Thyroid gland (tissue), 4 donors: ENCODE measurements at regions of chr1 and their contacts with region 1.

Region 1: DNA sequence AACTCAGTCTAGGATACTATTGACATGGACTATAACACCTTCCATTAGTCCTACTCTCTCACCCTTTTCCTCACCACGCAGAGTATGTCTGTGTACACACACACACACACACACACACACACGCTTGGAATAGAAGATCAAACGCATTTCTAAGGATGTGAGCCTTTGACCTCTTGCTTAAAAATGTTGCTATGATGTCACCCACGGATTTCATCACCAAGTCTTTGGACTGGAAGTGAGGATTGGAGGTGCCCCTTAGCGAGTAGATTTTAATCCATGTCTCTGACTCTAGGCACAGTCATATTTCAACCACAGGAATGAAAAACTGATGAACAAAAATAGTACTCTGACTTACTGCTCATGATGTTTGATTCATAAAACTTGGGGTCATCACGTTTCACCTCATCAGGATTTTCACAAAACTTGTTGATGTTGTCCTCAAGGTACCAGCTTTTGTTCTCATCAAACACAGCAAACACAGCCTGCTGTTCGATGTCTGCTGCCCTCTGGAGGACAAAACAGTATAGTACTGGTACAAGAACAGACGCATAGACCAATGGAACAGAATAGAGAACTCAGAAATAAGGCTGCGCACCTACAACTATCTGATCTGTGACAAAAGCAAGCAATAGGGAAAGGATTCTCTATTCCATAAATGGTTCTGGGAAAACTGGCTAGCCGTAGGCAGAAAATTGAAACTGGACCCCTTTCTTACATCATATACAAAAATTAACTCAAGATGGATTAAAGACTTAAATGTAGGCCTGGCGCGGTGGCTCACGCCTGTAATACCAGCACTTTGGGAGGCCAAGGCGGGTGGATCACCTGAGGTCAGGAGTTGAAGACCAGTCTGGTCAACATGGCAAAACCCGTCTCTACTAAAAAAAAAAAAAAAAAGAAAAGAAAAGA is 39.9 kb downstream of the F5 start:
- DNase-seq: peak; percentile 44 to 51
- H3K4me3 ChIP-seq: no peak overlapping the region
- H3K27ac ChIP-seq: no peak overlapping the region
- H3K4me1 ChIP-seq: no peaks in the 10 kb centered on the region
- H3K27me3 ChIP-seq: no peaks in the 10 kb centered on the region
- CTCF ChIP-seq: peak; percentile 48 to 90 (median 84)
- POLR2A ChIP-seq: no peak

Region 2: DNA sequence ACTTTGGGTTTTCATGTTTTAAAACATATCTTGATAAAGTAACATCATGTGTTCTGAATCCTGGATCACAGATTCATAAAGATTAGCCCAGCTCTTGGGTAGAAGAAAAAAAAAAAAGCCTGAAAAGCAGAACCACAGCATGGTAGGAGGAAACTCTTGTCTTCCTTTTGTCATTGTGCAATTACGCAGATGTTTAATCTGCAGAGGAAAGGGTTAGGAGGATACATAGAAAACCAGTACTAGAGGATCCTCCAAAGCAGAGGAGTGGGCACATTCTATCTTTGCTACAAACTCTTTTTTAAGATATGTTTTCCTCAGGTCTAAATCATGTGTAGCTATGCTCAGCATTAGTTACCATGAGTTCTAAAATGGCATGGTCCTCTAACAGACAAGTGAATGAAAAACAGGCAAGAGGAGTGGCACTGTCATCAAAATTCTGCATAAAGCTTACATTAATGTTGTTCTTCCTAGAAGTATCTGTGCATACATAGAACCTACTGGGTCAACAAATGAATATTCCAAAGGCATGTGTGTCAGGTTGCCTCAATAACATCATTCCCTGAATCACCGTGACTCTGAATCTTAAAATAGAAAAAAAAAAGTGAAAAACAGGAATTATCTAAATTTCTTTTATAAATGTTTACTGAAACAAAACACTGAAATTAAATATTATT is 285.7 kb before region 1 on chr1:
- intact Hi-C with region 1: no loop called
- DNase-seq: no peak
- H3K4me3 ChIP-seq: no peak overlapping the region
- H3K27ac ChIP-seq: no peak overlapping the region
- H3K4me1 ChIP-seq: no peaks in the 10 kb centered on the region
- H3K27me3 ChIP-seq: no peaks in the 10 kb centered on the region
- CTCF ChIP-seq: no peak
- POLR2A ChIP-seq: no peak

Region 3: GRCh38 chr1:169466259-169467230 is 79.8 kb before region 1 on chr1:
- intact Hi-C with region 1: loop called (anchors 5 kb)
- DNase-seq: peak; percentile 40 to 41
- H3K4me3 ChIP-seq: no peak overlapping the region
- H3K27ac ChIP-seq: no peak overlapping the region
- H3K4me1 ChIP-seq: no peaks in the 10 kb centered on the region
- H3K27me3 ChIP-seq: no peaks in the 10 kb centered on the region
- CTCF ChIP-seq: peak in 4 of 6 experiments; percentile 33 to 56 (median 47)
- POLR2A ChIP-seq: no peak

Region 4: GRCh38 chr1:169835647-169836046 is 289.3 kb after region 1 on chr1:
- intact Hi-C with region 1: no loop called
- DNase-seq: no peak
- H3K4me3 ChIP-seq: no peak overlapping the region
- H3K27ac ChIP-seq: no peak overlapping the region
- H3K4me1 ChIP-seq: no peaks in the 10 kb centered on the region
- H3K27me3 ChIP-seq: no peaks in the 10 kb centered on the region
- CTCF ChIP-seq: no peak
- POLR2A ChIP-seq: no peak